ENCODE measurements at regions of chr11 and their contacts with region 1.

Region 1: GRCh38 chr11:46616998-46617675 is at the starts of genes ATG13 and HARBI1:
- DNase-seq: peak; percentile 68 to 96
- H3K4me3 ChIP-seq: peak within 1 kb of the TSS; percentile 100
- CTCF ChIP-seq: no peak
- POLR2A ChIP-seq: no peak
- total RNA-seq, gene ATG13: 42.0 to 151 (median 98.0) TPM
- total RNA-seq, gene HARBI1: 3.0 to 6.5 (median 4.8) TPM

Region 2: DNA sequence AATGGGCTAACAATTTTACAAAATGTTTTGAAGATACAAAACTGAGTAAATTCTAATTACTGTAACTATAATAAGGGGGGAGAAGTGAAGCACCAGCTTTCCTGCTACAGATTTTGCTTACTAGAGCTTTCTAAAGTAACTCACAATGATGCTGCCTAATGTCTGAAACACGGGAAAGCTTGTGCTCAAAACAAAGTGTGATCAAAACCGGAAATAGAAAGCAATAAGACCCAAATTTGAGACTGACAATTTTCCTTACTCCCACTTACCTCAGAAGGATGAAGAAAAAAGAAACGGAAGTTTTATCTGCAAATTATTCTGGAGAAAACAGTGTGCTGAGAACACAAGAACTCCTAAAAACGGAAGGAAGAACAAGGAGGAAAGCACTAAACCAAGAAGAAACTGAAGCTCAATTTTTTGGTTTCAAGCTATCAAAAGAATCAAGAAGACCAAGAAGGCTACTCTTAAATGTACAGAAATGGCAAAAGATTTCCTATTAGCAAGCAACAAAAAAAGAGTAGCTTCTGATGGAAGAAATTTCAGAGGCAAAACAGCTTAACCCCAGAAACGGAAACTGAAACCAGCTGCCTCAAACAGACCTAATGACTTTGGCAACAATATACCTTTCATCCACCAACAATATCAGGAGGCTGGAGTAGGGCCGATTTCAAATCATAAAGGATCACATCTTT is 56.7 kb before region 1 on chr11:
- intact Hi-C with region 1: loop called (anchors 10 kb)
- DNase-seq: no peak
- H3K4me3 ChIP-seq: no peak overlapping the region
- CTCF ChIP-seq: no peak
- POLR2A ChIP-seq: no peak

Region 3: DNA sequence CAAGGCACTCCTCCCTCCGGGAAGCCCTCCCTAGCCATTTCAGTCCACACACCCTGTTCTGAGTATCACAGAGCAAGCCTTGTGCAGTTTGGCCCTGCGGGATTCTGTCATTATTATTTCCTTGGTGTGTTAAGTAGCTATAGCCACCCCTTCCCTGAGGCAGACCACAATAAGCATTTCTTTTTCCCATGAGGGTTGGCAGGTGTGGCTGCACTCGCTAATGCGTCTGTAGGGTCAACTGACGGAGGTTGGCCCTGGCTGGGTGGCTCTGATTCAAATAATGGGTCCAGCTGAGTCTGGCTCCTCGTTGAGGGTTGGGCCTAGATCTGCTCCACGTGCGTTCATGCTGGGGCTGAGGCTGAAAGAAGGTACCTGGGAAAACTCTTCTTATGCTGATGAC is 107.0 kb after region 1 on chr11:
- intact Hi-C with region 1: no loop called
- DNase-seq: no peak
- H3K4me3 ChIP-seq: no peak overlapping the region
- CTCF ChIP-seq: no peak
- POLR2A ChIP-seq: no peak

Measured in lower leg skin (tissue), 4 donors.